GM10248 (cell line): ENCODE measurements at regions of chr1 and their contacts with region 1.

Region 1: GRCh38 chr1:150383631-150384324 is 19.8 kb downstream of the RPRD2 start:
- DNase-seq: no peak
- CTCF ChIP-seq: no peak

Region 2: GRCh38 chr1:150372580-150372979 is 11.2 kb before region 1 on chr1:
- CTCF ChIA-PET with region 1: interaction called, 18 read pairs
- POLR2A ChIA-PET with region 1: no interaction called
- DNase-seq: no peak
- CTCF ChIP-seq: no peak